ENCODE measurements at regions of chr16 and their contacts with region 1.

Region 1: GRCh38 chr16:69724981-69725479 is 1.3 kb downstream of the NQO1 start:
- DNase-seq: no peak
- ATAC-seq: no peak
- H3K4me3 ChIP-seq: peak overlapping the region in 5 of 12 donors; percentile 56 to 72 (median 67)
- H3K27ac ChIP-seq: peak overlapping the region in 11 of 12 donors; percentile 8 to 88 (median 74)
- H3K4me1 ChIP-seq: peaks cover 0 to 33% (median 19%) of the 10 kb centered on the region in 12 donors
- H3K27me3 ChIP-seq: no peaks in the 10 kb centered on the region
- CTCF ChIP-seq: no peak
- POLR2A ChIP-seq: no peak

Region 2: GRCh38 chr16:69741919-69742904 is 17.2 kb after region 1 on chr16:
- intact Hi-C with region 1: loop called in 1 of 10 experiments (anchors 2 kb)
- DNase-seq: peak; percentile 76 to 87 (median 84)
- ATAC-seq: peak in 3 of 4 donors; percentile 60 to 66 (median 65)
- H3K4me3 ChIP-seq: peak overlapping the region in 2 of 12 donors; percentile 12 to 16
- H3K27ac ChIP-seq: peak overlapping the region in 9 of 12 donors; percentile 15 to 64 (median 48)
- H3K4me1 ChIP-seq: peaks cover 0 to 21% (median 9%) of the 10 kb centered on the region in 12 donors
- H3K27me3 ChIP-seq: no peaks in the 10 kb centered on the region
- CTCF ChIP-seq: no peak
- POLR2A ChIP-seq: no peak

Region 3: GRCh38 chr16:69762814-69763598 is 38.0 kb after region 1 on chr16:
- intact Hi-C with region 1: no loop called
- DNase-seq: no peak
- ATAC-seq: peak; percentile 21 to 43 (median 39)
- H3K4me3 ChIP-seq: peak overlapping the region; percentile 74 to 99 (median 90)
- H3K27ac ChIP-seq: peak overlapping the region; percentile 67 to 92 (median 86)
- H3K4me1 ChIP-seq: peaks cover 0 to 20% (median 10%) of the 10 kb centered on the region in 12 donors
- H3K27me3 ChIP-seq: no peaks in the 10 kb centered on the region
- CTCF ChIP-seq: no peak
- POLR2A ChIP-seq: no peak

Measured in heart left ventricle (tissue), 16 donors.